HCT116 (cell line): ENCODE measurements at regions of chr12 and their contacts with region 1.

Region 1: GRCh38 chr12:65556681-65557437 is 267.4 kb upstream of the HMGA2 start:
- DNase-seq: peak; percentile 80
- ATAC-seq: peak; percentile 98
- H3K4me3 ChIP-seq: no peak overlapping the region
- H3K27ac ChIP-seq: peak overlapping the region; percentile 53
- H3K4me1 ChIP-seq: peaks cover 7 to 45% of the 10 kb centered on the region in 2 experiments; a peak in 3 of 4 replicates
- H3K27me3 ChIP-seq: no peaks in the 10 kb centered on the region
- CTCF ChIP-seq: peak; percentile 67 to 94 (median 85); a peak in 5 of 6 replicates
- POLR2A ChIP-seq: no peak
- RAD21 ChIP-seq: peak; percentile 94

Region 2: DNA sequence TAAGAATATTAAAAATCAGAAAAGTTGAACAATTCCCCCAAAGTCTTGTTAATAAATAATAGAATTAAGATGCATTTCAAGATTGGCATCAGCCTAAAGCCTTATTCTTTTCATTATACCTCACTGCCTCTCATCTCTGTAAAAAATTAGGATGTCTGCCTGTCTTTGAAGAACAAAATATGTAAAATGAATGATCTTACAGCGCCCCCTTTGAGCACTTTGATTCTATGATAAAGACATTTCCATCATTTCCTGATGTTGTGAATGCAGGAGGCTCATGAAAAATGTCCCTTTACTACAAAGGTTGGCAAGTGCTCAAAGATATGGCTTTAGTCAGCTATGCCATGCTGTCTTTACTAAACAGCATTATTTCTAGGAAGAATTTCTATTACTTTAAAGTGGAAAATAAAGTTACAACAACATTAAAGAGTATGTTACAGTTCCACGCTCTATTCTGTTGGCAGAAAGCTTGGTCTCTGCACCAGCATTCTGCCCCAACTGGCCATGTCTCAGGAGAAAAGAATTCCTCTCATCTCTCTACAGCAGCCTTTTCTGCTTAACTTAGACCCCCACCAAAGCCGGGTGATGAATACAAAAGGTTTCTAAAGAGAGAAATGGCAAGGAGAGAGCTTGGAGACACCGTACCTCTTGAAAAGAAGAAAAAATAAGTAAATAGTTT is 478.6 kb after region 1 on chr12:
- CTCF ChIA-PET with region 1: no interaction called
- POLR2A ChIA-PET with region 1: no interaction called
- RAD21 ChIA-PET with region 1: no interaction called
- intact Hi-C with region 1: loop called (anchors 10 kb)
- DNase-seq: peak; percentile 68
- ATAC-seq: peak; percentile 62
- H3K4me3 ChIP-seq: peak overlapping the region in 1 of 2 experiments; percentile 2; a peak in 1 of 4 replicates
- H3K27ac ChIP-seq: peak overlapping the region; percentile 62; the same call in 1 of the 2 replicates
- H3K4me1 ChIP-seq: peaks cover 17 to 28% of the 10 kb centered on the region in 2 experiments
- H3K27me3 ChIP-seq: no peaks in the 10 kb centered on the region
- CTCF ChIP-seq: peak; percentile 57 to 77 (median 73)
- POLR2A ChIP-seq: no peak
- RAD21 ChIP-seq: peak; percentile 84

Region 3: GRCh38 chr12:66087365-66087943 is 530.6 kb after region 1 on chr12:
- CTCF ChIA-PET with region 1: no interaction called
- POLR2A ChIA-PET with region 1: no interaction called
- RAD21 ChIA-PET with region 1: no interaction called
- intact Hi-C with region 1: loop called (anchors 2 kb)
- DNase-seq: peak; percentile 68
- ATAC-seq: peak; percentile 91
- H3K4me3 ChIP-seq: no peak overlapping the region
- H3K27ac ChIP-seq: no peak overlapping the region
- H3K4me1 ChIP-seq: peaks cover 0 to 14% of the 10 kb centered on the region in 2 experiments; a peak in 1 of 4 replicates
- H3K27me3 ChIP-seq: no peaks in the 10 kb centered on the region
- CTCF ChIP-seq: peak; percentile 75 to 97 (median 90)
- POLR2A ChIP-seq: no peak
- RAD21 ChIP-seq: peak; percentile 95